H1 (cell line): ENCODE measurements at regions of chr1 and their contacts with region 1.

Region 1: DNA sequence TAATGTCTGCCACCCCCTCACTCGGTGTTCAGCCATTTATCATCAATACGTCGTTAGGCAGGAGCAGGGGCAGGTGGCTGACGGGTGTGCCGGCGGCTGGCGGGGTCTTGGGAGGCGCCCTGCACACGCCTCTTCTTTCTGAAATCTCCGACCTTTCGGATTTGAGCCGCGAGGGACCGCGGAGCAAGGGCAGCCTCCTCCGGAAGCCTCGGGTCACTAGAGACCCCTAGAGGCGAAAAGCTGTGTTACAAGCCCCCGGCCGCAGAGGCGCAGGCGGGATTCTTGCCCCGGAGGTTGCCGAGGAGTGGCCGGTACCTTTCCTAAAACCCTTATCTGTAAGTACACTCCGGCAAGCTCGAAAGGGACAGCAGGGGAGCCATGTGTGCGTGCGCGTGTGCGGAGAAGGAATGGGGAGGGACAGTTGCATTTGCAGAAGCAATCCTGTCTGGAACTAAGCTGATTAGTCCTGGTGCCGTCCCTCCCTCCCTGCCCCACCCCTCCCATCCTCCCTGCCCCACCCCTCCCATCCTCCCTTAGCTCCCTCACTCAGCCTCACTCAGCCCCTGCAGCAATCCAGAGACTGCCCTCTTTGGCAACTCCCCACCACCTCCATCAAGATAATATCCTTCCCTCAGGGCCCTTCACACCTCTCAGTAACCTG is 11.0 kb downstream of the BRINP2 start:
- DNase-seq: peak; percentile 56 to 96
- H3K4me3 ChIP-seq: peak overlapping the region; percentile 27 to 60 (median 56); a peak in 7 of 8 replicates
- H3K27ac ChIP-seq: no peak overlapping the region
- H3K4me1 ChIP-seq: peaks cover 0 to 6% (median 2%) of the 10 kb centered on the region in 4 experiments; a peak in 4 of 7 replicates
- H3K27me3 ChIP-seq: peaks cover 2 to 18% (median 14%) of the 10 kb centered on the region in 4 experiments; a peak in 5 of 7 replicates
- CTCF ChIP-seq: peak; percentile 68 to 94 (median 90)
- EP300 ChIP-seq: no peak
- POLR2A ChIP-seq: no peak
- RAD21 ChIP-seq: peak; percentile 87 to 89

Region 2: GRCh38 chr1:176897350-176898236 is 284.2 kb before region 1 on chr1:
- CTCF ChIA-PET with region 1: interaction called, 69 read pairs
- POLR2A ChIA-PET with region 1: no interaction called
- DNase-seq: peak; percentile 70 to 94
- H3K4me3 ChIP-seq: peak overlapping the region in 3 of 4 experiments; percentile 10 to 59 (median 22); a peak in 5 of 8 replicates
- H3K27ac ChIP-seq: no peak overlapping the region
- H3K4me1 ChIP-seq: no peaks in the 10 kb centered on the region
- H3K27me3 ChIP-seq: no peaks in the 10 kb centered on the region; a peak in 1 of 7 replicates
- CTCF ChIP-seq: peak; percentile 84 to 89 (median 87)
- EP300 ChIP-seq: no peak
- POLR2A ChIP-seq: no peak
- RAD21 ChIP-seq: peak; percentile 89 to 92

Region 3: GRCh38 chr1:176903474-176903873 is 278.3 kb before region 1 on chr1:
- CTCF ChIA-PET with region 1: interaction called, 69 read pairs
- POLR2A ChIA-PET with region 1: no interaction called
- DNase-seq: no peak
- H3K4me3 ChIP-seq: no peak overlapping the region
- H3K27ac ChIP-seq: no peak overlapping the region
- H3K4me1 ChIP-seq: peaks cover 0 to 9% (median 0%) of the 10 kb centered on the region in 4 experiments; a peak in 1 of 7 replicates
- H3K27me3 ChIP-seq: no peaks in the 10 kb centered on the region
- CTCF ChIP-seq: no peak
- EP300 ChIP-seq: no peak
- POLR2A ChIP-seq: no peak
- RAD21 ChIP-seq: no peak

Region 4: DNA sequence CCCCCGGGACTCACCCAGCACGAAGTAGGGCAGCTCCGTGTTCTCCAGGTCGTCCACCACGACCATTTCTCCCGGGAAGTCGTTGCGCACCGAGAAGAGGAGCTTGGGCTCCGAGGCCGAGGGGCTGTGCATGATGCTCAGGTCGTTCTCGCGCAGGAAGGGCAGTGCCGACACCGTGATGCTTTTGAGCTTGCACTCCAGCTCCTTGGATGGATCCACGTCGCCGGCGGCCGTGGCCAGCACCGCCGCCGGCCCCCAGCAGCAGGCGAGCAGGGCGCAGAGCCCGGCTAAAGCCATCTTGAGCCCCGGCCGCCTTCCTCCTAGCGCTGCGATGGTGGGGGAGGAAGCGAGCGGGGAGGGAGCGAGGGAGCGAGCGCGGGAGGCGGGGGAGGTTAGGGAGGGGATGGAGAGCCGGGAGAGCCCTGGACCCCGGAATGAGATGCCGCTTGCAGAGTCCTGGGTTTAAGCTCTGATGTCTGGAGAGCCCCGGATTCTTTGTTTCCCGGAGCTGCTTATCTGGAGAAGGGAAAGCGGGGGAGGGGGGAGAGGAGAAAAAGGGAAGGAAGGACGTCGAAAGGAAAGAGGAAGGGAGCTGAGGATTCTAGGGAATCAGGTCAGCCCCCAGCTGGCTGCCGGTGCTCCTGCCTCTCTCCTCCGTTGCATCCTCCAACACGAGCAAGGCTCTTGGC is 17.2 kb before region 1 on chr1 and contains the start of gene ASTN1:
- CTCF ChIA-PET with region 1: interaction called, 19 read pairs
- POLR2A ChIA-PET with region 1: interaction called, 6 read pairs
- DNase-seq: peak in 1 of 2 experiments; percentile 78
- H3K4me3 ChIP-seq: peak within 1 kb of the TSS; percentile 80 to 86 (median 82)
- H3K27ac ChIP-seq: no peak within 1 kb of the TSS
- H3K4me1 ChIP-seq: peaks cover 0 to 5% (median 4%) of the 10 kb centered on the region in 4 experiments; a peak in 4 of 7 replicates
- H3K27me3 ChIP-seq: peaks cover 7 to 42% (median 34%) of the 10 kb centered on the region in 4 experiments
- CTCF ChIP-seq: no peak
- EP300 ChIP-seq: no peak
- POLR2A ChIP-seq: no peak
- RAD21 ChIP-seq: 0 out of 4 replicates have a peak, but pooled peaks of 1 of the 2 experiments have one; percentile 2
- total RNA-seq, gene ASTN1: 4.1 and 4.3 TPM in 2 replicates

Region 5: DNA sequence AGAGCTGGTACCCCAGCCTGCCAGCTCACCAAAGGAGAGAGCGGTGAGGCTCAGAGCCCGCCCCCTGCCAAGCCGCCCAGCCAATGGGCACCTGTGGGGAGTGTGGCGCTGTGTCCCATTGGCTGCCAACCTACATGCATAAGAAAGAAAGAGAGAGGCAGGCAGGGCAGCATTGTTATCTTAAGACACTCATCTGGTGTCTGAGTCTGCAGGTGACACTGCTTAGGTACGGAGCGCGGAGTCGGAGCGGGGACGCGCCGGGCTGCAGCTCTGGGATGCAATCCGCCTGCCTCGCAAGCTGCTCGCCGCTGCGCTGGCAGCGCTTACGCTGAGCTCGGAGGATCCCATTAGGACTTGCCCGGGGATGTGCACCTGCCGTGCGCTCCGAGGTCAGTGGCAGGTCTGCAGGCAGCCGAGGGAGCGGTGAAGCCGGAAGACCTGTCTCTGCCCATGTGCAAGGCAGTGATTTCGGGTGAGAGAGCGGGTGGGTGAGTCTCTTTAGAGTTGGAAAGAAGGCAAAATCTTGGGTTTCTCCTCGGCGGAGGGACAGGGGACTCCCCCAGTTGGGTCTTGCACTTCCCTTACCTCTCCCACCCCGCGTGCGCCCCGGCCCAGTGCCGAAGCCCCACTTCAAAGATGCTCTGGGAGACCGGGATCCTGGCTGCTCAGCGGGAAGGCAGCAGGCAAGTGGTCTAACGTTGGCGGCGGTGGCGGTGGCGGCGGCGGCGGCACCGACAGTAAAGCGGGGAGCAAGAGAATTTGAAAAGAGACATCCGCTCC is 10.8 kb before region 1 on chr1 and contains the start of gene BRINP2:
- CTCF ChIA-PET with region 1: interaction called, 32 read pairs
- POLR2A ChIA-PET with region 1: interaction called, 6 read pairs
- DNase-seq: peak; percentile 46 to 89
- H3K4me3 ChIP-seq: peak within 1 kb of the TSS; percentile 46 to 71 (median 54)
- H3K27ac ChIP-seq: no peak within 1 kb of the TSS
- H3K4me1 ChIP-seq: peaks cover 0 to 4% (median 2%) of the 10 kb centered on the region in 4 experiments; a peak in 5 of 7 replicates
- H3K27me3 ChIP-seq: peaks cover 24 to 61% (median 52%) of the 10 kb centered on the region in 4 experiments
- CTCF ChIP-seq: no peak
- EP300 ChIP-seq: no peak
- POLR2A ChIP-seq: no peak
- RAD21 ChIP-seq: no peak; a peak in 1 of 4 replicates
- total RNA-seq, gene BRINP2: 0.39 and 0.42 TPM in 2 replicates